K562 (cell line): ENCODE measurements at regions of chr7 and their contacts with region 1.

Region 1: DNA sequence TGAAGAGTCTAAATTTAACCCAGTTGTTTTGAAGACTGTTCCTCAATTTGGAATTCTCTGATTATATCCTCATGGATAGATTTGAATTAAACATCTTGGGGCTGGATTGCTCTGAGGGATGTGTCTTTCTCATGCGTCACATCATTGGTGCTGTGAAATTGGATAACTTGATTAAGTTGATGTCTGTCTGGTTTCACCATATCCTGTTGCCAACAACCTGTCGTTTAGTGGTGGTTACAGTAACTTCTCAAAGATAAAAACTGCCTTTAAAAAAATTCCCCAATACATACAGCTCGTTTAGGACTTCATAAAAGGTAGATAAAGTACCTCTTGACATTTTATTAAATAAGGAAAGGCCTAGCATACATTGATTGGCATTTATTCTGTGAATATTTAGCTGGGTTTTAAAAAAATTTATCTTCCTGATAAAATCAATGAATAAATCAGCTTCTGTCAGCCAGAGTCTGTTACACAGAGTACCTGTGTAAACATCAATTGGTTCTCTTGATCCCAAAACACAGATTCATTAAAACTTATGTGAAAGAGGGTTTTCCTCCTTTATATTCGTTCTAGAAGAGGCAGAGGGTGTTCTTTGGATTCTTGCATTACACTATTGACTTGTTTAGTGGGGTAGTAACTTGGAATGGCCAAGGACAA is 10.5 kb downstream of the CRCP start:
- DNase-seq: no peak
- ATAC-seq: no peak
- H3K4me3 ChIP-seq: no peak overlapping the region
- H3K27ac ChIP-seq: no peak overlapping the region
- H3K4me1 ChIP-seq: peaks cover 11 to 13% of the 10 kb centered on the region in 2 experiments
- H3K27me3 ChIP-seq: no peaks in the 10 kb centered on the region
- CTCF ChIP-seq: no peak
- EP300 ChIP-seq: no peak
- POLR2A ChIP-seq: no peak
- RAD21 ChIP-seq: no peak

Region 2: DNA sequence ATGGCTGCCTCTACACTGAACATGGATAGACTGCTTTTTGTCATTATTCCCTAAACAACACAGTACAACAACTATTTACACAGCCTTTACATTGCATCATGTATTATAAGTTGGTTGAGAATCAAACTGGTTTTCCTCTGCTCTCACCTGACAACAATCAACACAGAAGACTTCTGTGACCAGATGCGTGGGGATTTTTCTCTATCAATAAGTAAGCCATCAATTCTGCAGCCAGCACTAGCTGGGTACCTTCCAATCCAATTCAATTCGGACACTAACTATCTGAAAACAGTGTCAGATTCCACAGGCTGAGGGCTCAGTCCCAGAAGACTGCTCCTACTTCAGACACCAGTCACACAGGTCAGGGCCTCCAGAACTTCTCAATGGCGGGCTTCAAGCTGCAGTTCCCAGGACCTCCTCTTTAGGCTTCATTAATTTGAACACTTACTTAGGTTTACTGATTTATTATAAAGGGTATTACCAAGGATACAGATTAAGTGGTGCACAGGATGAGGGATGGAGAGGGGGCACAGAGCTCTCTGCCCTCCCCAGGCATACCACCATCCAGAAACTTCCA is 86.0 kb before region 1 on chr7:
- CTCF ChIA-PET with region 1: no interaction called
- POLR2A ChIA-PET with region 1: no interaction called
- in situ Hi-C with region 1: loop called (anchors 5 kb)
- intact Hi-C with region 1: no loop called
- DNase-seq: no peak
- ATAC-seq: no peak; the same call in 2 of the 3 replicates
- H3K4me3 ChIP-seq: no peak overlapping the region
- H3K27ac ChIP-seq: no peak overlapping the region
- H3K4me1 ChIP-seq: peaks cover 0 to 6% of the 10 kb centered on the region in 2 experiments; a peak in 3 of 5 replicates
- H3K27me3 ChIP-seq: peaks cover 13% of the 10 kb centered on the region in 2 experiments
- CTCF ChIP-seq: no peak
- EP300 ChIP-seq: no peak
- POLR2A ChIP-seq: no peak
- RAD21 ChIP-seq: no peak

Region 3: GRCh38 chr7:66114793-66115649 is 10.2 kb before region 1 on chr7 and contains the start of gene CRCP:
- CTCF ChIA-PET with region 1: no interaction called
- POLR2A ChIA-PET with region 1: interaction called, 10 read pairs
- in situ Hi-C with region 1: no loop called
- intact Hi-C with region 1: no loop called
- DNase-seq: peak; percentile 91 to 95 (median 92)
- ATAC-seq: peak; percentile 92
- H3K4me3 ChIP-seq: peak within 1 kb of the TSS; percentile 76
- H3K27ac ChIP-seq: peak within 1 kb of the TSS; percentile 98
- H3K4me1 ChIP-seq: peaks cover 19 to 27% of the 10 kb centered on the region in 2 experiments; a peak in 4 of 5 replicates
- H3K27me3 ChIP-seq: no peaks in the 10 kb centered on the region
- CTCF ChIP-seq: peak; percentile 45 to 56 (median 53); a peak in 5 of 6 replicates
- EP300 ChIP-seq: no peak; the same call in 1 of the 2 replicates
- POLR2A ChIP-seq: peak; percentile 98
- RAD21 ChIP-seq: peak; percentile 22 to 30; a peak in 3 of 4 replicates
- polyA plus RNA-seq, gene CRCP: 22.1 to 26.1 TPM